ENCODE measurements at regions of chr16 and their contacts with region 1.

Region 1: DNA sequence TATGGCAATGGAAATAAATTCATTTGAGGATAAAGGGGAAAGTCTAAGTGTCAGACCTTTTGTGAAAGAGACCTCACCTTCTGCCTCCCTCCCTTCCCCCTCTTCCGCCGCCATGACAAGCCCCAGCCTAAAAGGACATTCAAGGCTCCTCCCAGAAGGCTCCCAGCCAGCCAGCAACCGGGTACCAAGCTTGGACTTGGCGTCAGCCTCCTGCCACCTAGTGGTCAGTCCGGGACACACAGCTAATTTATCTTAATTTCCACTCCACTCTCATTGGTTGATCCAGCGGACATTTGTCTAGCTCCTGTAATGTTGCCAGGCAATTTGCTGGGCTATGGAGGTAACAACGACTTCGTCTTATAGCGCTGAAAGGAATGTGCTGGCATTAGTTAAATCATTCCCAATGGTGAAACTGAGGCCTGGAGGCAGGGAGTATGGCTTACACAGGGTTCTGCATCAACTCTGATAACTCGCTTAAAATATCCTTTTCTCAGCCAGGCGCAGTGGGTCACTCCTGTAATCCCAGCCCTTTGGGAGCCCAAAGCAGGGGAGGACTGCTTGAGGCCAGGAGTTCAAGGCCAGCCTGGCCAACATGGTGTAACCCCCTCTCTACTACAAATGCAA is 19.3 kb upstream of the CLEC3A start:
- DNase-seq: peak; percentile 90
- H3K4me3 Mint-ChIP-seq: no peak overlapping the region
- H3K27ac Mint-ChIP-seq: no peak overlapping the region
- H3K4me1 Mint-ChIP-seq: peaks cover 7% of the 10 kb centered on the region
- H3K27me3 Mint-ChIP-seq: no peaks in the 10 kb centered on the region
- CTCF ChIP-seq: peak; percentile 91

Region 2: GRCh38 chr16:77660311-77660710 is 342.7 kb before region 1 on chr16:
- CTCF ChIA-PET with region 1: interaction called, 11 read pairs
- POLR2A ChIA-PET with region 1: no interaction called
- intact Hi-C with region 1: no loop called
- DNase-seq: peak; percentile 53
- H3K4me3 Mint-ChIP-seq: no peak overlapping the region
- H3K27ac Mint-ChIP-seq: no peak overlapping the region
- H3K4me1 Mint-ChIP-seq: peaks cover 4% of the 10 kb centered on the region
- H3K27me3 Mint-ChIP-seq: peaks cover 55% of the 10 kb centered on the region
- CTCF ChIP-seq: peak; percentile 55

Region 3: GRCh38 chr16:77951775-77952174 is 51.3 kb before region 1 on chr16:
- CTCF ChIA-PET with region 1: interaction called, 21 read pairs
- POLR2A ChIA-PET with region 1: no interaction called
- intact Hi-C with region 1: no loop called
- DNase-seq: peak; percentile 47
- H3K4me3 Mint-ChIP-seq: no peak overlapping the region
- H3K27ac Mint-ChIP-seq: no peak overlapping the region
- H3K4me1 Mint-ChIP-seq: no peaks in the 10 kb centered on the region
- H3K27me3 Mint-ChIP-seq: no peaks in the 10 kb centered on the region
- CTCF ChIP-seq: peak; percentile 35

Region 4: DNA sequence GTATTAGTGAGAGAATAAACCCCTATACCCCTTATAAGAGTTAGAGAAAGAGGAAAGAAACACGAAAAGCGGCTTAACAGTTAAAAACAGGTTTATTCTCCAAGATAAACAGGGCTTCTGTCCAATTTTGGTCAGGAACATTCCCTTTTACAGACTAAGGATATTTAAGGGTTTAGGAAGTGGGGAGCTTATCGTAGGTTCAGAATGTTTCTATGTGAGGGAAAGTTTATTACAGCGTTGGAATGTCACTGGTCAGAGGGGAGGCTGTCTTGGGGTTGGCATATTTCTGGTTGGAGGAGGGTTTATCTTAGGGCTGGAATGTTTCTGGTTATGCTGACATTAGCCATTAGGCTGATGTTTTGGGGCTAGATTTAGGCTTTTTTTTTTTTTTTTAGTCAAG is 62.3 kb after region 1 on chr16:
- CTCF ChIA-PET with region 1: interaction called, 11 read pairs
- POLR2A ChIA-PET with region 1: no interaction called
- intact Hi-C with region 1: no loop called
- DNase-seq: no peak
- H3K4me3 Mint-ChIP-seq: no peak overlapping the region
- H3K27ac Mint-ChIP-seq: no peak overlapping the region
- H3K4me1 Mint-ChIP-seq: no peaks in the 10 kb centered on the region
- H3K27me3 Mint-ChIP-seq: no peaks in the 10 kb centered on the region
- CTCF ChIP-seq: no peak

Region 5: DNA sequence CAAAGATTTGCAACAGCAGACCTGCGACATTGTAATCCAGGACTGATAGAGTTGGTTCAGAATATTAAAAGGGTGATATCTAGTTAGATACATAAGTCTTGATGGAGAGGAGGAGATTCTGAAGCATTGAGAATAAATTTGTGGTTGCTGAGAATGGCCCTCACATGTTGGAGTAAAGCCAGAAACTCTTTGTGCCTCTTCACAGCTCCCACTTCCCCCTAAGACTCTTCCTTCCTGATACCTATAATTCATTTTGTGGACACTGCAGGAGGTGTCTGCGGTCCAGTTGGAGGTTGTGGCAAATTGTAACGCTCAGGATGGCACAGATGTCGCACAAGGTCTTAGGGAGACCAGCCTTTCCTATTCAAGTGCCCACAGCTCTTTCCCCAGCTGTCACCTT is 113.9 kb after region 1 on chr16:
- CTCF ChIA-PET with region 1: interaction called, 12 read pairs
- POLR2A ChIA-PET with region 1: interaction called, 3 read pairs
- intact Hi-C with region 1: no loop called
- DNase-seq: no peak
- H3K4me3 Mint-ChIP-seq: no peak overlapping the region
- H3K27ac Mint-ChIP-seq: no peak overlapping the region
- H3K4me1 Mint-ChIP-seq: no peaks in the 10 kb centered on the region
- H3K27me3 Mint-ChIP-seq: no peaks in the 10 kb centered on the region
- CTCF ChIP-seq: no peak

Measured in MCF 10A (cell line).